ENCODE measurements at regions of chr7 and their contacts with region 1.

Region 1: DNA sequence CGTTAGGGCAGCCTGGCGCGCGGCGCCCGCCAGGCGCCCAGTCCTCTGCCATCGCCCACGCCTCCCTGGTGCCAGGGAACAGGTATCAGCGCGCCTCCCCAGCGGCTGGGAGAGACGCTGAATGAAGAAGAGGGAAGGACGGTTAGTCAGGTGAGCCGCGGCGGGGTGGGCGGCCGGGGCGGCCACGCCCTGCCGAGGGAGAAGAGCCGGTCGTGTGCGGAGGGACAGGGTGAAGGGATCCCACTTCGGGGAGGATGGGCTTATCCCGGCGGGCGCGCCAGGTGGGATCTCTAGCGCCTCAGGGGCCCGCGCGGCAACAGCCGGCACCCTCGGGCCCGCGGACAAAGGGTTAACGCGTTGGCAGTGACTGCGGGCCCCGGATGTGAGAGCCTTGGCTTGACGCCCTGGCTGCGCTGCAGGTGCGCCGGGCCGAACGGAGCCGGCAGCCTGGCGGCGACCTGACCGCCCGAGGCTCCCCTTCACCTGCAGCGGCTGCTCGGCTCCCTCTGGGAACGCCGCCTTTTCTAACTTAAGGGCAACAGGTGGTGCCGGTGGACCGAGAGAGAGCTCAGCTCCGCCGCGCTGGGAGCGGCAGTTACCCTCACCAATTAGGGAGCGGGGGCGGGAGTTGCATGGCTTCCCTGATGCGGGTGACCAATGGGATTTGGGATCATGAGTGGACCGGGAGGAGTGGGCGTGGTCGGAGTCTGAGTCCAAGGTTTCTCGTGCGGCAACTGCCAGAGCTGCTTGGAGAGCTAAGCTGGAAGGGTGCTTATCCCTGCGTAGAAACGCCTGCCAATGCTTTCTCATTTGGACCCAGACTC is at the start of gene ARL4A:
- DNase-seq: peak; percentile 75 to 90 (median 86)
- H3K4me3 ChIP-seq: peak within 1 kb of the TSS; percentile 75
- H3K4me3 Mint-ChIP-seq: peak within 1 kb of the TSS; percentile 94 to 99 (median 96)
- H3K27ac ChIP-seq: peak within 1 kb of the TSS; percentile 97
- H3K27ac Mint-ChIP-seq: peak within 1 kb of the TSS; percentile 98 to 99 (median 98)
- H3K4me1 ChIP-seq: peaks cover 7% of the 10 kb centered on the region
- H3K4me1 Mint-ChIP-seq: peaks cover 19 to 49% (median 34%) of the 10 kb centered on the region in 3 donors
- H3K27me3 ChIP-seq: no peaks in the 10 kb centered on the region
- H3K27me3 Mint-ChIP-seq: no peaks in the 10 kb centered on the region
- total RNA-seq, gene ARL4A: 10.6 to 11.6 TPM

Region 2: GRCh38 chr7:12584930-12585329 is 102.2 kb before region 1 on chr7:
- CTCF ChIA-PET with region 1: no interaction called
- POLR2A ChIA-PET with region 1: no interaction called
- DNase-seq: no peak
- H3K4me3 ChIP-seq: no peak overlapping the region
- H3K4me3 Mint-ChIP-seq: no peak overlapping the region
- H3K27ac ChIP-seq: no peak overlapping the region
- H3K27ac Mint-ChIP-seq: no peak overlapping the region
- H3K4me1 ChIP-seq: no peaks in the 10 kb centered on the region
- H3K4me1 Mint-ChIP-seq: no peaks in the 10 kb centered on the region
- H3K27me3 ChIP-seq: peaks cover 3% of the 10 kb centered on the region
- H3K27me3 Mint-ChIP-seq: peaks cover 17 to 18% of the 10 kb centered on the region in 2 donors

Region 3: GRCh38 chr7:12635841-12636240 is 51.3 kb before region 1 on chr7:
- CTCF ChIA-PET with region 1: interaction called, 14 read pairs
- POLR2A ChIA-PET with region 1: interaction called, 4 read pairs
- DNase-seq: peak in 2 of 5 donors; percentile 26 to 30
- H3K4me3 ChIP-seq: peak overlapping the region; percentile 45
- H3K4me3 Mint-ChIP-seq: peak overlapping the region; percentile 71 to 86 (median 81)
- H3K27ac ChIP-seq: peak overlapping the region; percentile 6
- H3K27ac Mint-ChIP-seq: peak overlapping the region; percentile 49 to 91 (median 70)
- H3K4me1 ChIP-seq: peaks cover 5% of the 10 kb centered on the region
- H3K4me1 Mint-ChIP-seq: peaks cover 15 to 27% (median 25%) of the 10 kb centered on the region in 3 donors
- H3K27me3 ChIP-seq: no peaks in the 10 kb centered on the region
- H3K27me3 Mint-ChIP-seq: peaks cover 0 to 20% of the 10 kb centered on the region in 2 donors

Region 4: GRCh38 chr7:12674849-12675248 is 12.3 kb before region 1 on chr7:
- CTCF ChIA-PET with region 1: interaction called, 23 read pairs
- POLR2A ChIA-PET with region 1: no interaction called
- DNase-seq: peak in 4 of 5 donors; percentile 42 to 63 (median 50)
- H3K4me3 ChIP-seq: no peak overlapping the region
- H3K4me3 Mint-ChIP-seq: peak overlapping the region in 1 of 7 donors; percentile 12
- H3K27ac ChIP-seq: no peak overlapping the region
- H3K27ac Mint-ChIP-seq: peak overlapping the region in 7 of 8 donors; percentile 0 to 84 (median 73)
- H3K4me1 ChIP-seq: no peaks in the 10 kb centered on the region
- H3K4me1 Mint-ChIP-seq: peaks cover 10 to 15% (median 14%) of the 10 kb centered on the region in 3 donors
- H3K27me3 ChIP-seq: no peaks in the 10 kb centered on the region
- H3K27me3 Mint-ChIP-seq: peaks cover 0 to 3% of the 10 kb centered on the region in 2 donors

Region 5: DNA sequence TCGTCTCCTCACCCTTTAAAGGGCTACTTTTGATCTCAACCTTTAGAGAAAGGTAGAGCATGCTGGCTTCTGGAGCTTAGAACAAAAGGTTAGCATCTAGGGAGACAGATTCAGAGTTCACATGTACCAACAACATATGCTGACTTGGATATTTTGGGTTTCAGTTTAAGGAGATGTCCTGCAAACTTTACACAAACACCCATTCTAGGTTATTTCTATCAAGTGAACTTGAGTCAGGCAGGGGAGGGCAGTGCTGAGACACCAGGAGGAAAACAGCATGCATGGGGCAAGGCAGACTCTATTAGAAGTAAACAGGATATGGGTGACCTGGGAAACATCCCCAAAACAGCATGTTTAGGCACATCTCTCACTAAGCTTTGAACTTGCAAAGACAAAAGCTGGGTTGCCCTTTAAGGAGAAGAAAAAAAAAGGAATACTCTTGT is 44.1 kb after region 1 on chr7:
- CTCF ChIA-PET with region 1: interaction called, 26 read pairs
- POLR2A ChIA-PET with region 1: interaction called, 6 read pairs
- DNase-seq: peak in 1 of 5 donors; percentile 6
- H3K4me3 ChIP-seq: no peak overlapping the region
- H3K4me3 Mint-ChIP-seq: peak overlapping the region in 6 of 7 donors; percentile 60 to 83 (median 75)
- H3K27ac ChIP-seq: peak overlapping the region; percentile 10
- H3K27ac Mint-ChIP-seq: peak overlapping the region in 7 of 8 donors; percentile 2 to 88 (median 78)
- H3K4me1 ChIP-seq: peaks cover 20% of the 10 kb centered on the region
- H3K4me1 Mint-ChIP-seq: peaks cover 22 to 32% (median 28%) of the 10 kb centered on the region in 3 donors
- H3K27me3 ChIP-seq: no peaks in the 10 kb centered on the region
- H3K27me3 Mint-ChIP-seq: peaks cover 0 to 3% of the 10 kb centered on the region in 2 donors

Region 6: DNA sequence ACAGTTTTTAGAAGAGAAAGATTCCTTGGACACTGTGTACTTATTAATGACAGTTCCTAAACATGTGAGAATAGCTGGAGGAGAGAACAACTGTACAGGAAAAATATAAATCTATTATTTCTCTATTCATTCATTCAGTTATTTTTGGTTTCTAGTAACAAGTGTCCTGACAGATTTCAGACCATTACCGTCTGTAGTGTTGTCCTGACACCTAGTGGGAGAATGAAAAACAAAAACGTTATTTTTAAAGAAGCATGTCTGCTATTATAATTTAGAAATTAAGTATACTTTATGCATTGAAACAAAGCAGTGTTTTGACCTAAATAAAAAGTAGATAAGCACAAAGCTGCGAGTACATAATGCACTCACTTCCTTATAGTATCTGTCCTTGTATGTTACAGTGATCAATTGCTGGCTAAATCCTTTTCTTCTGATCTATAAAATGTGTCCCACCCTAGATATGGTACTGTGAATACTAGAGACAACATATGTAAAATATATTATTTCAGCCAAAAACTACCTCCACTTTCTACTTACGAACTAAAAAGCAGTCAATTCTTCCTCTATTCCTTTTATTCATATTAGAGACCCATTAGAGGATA is 575.9 kb after region 1 on chr7:
- CTCF ChIA-PET with region 1: interaction called, 25 read pairs
- POLR2A ChIA-PET with region 1: no interaction called
- DNase-seq: peak in 2 of 5 donors; percentile 22 to 27
- H3K4me3 ChIP-seq: no peak overlapping the region
- H3K4me3 Mint-ChIP-seq: no peak overlapping the region
- H3K27ac ChIP-seq: no peak overlapping the region
- H3K27ac Mint-ChIP-seq: no peak overlapping the region
- H3K4me1 ChIP-seq: no peaks in the 10 kb centered on the region
- H3K4me1 Mint-ChIP-seq: no peaks in the 10 kb centered on the region
- H3K27me3 ChIP-seq: no peaks in the 10 kb centered on the region
- H3K27me3 Mint-ChIP-seq: peaks cover 6 to 14% of the 10 kb centered on the region in 2 donors

Measured in CD8-positive, alpha-beta memory T cell (primary cell).